HCT116 (cell line): ENCODE measurements at regions of chr11 and their contacts with region 1.

Region 1: GRCh38 chr11:29448246-29448877 is 568.5 kb downstream of the KCNA4 start:
- DNase-seq: peak; percentile 2
- ATAC-seq: no peak; the same call in 1 of the 2 replicates
- H3K4me3 ChIP-seq: no peak overlapping the region
- H3K27ac ChIP-seq: no peak overlapping the region
- H3K4me1 ChIP-seq: no peaks in the 10 kb centered on the region
- H3K27me3 ChIP-seq: no peaks in the 10 kb centered on the region; the same call in 1 of the 2 replicates
- CTCF ChIP-seq: peak in 2 of 3 experiments; percentile 14 to 45; a peak in 1 of 6 replicates
- POLR2A ChIP-seq: no peak
- RAD21 ChIP-seq: peak; percentile 64

Region 2: GRCh38 chr11:29527391-29527936 is 79.1 kb after region 1 on chr11:
- CTCF ChIA-PET with region 1: no interaction called
- POLR2A ChIA-PET with region 1: no interaction called
- RAD21 ChIA-PET with region 1: no interaction called
- intact Hi-C with region 1: no loop called
- DNase-seq: peak; percentile 15
- ATAC-seq: peak; percentile 50
- H3K4me3 ChIP-seq: no peak overlapping the region
- H3K27ac ChIP-seq: no peak overlapping the region
- H3K4me1 ChIP-seq: no peaks in the 10 kb centered on the region
- H3K27me3 ChIP-seq: no peaks in the 10 kb centered on the region
- CTCF ChIP-seq: peak in 2 of 3 experiments; percentile 25 to 37; a peak in 2 of 6 replicates
- POLR2A ChIP-seq: no peak
- RAD21 ChIP-seq: no peak

Region 3: GRCh38 chr11:29669310-29669709 is 220.9 kb after region 1 on chr11:
- CTCF ChIA-PET with region 1: no interaction called
- POLR2A ChIA-PET with region 1: no interaction called
- RAD21 ChIA-PET with region 1: no interaction called
- intact Hi-C with region 1: no loop called
- DNase-seq: no peak
- ATAC-seq: no peak
- H3K4me3 ChIP-seq: no peak overlapping the region
- H3K27ac ChIP-seq: no peak overlapping the region
- H3K4me1 ChIP-seq: no peaks in the 10 kb centered on the region
- H3K27me3 ChIP-seq: no peaks in the 10 kb centered on the region
- CTCF ChIP-seq: no peak
- POLR2A ChIP-seq: no peak
- RAD21 ChIP-seq: no peak

Region 4: GRCh38 chr11:30143098-30143705 is 694.8 kb after region 1 on chr11:
- CTCF ChIA-PET with region 1: interaction called, 12 read pairs
- POLR2A ChIA-PET with region 1: no interaction called
- RAD21 ChIA-PET with region 1: interaction called in 1 of 2 experiments, 3 read pairs
- intact Hi-C with region 1: loop called (anchors 1 kb)
- DNase-seq: peak; percentile 16
- ATAC-seq: peak; percentile 67
- H3K4me3 ChIP-seq: no peak overlapping the region
- H3K27ac ChIP-seq: no peak overlapping the region
- H3K4me1 ChIP-seq: no peaks in the 10 kb centered on the region
- H3K27me3 ChIP-seq: no peaks in the 10 kb centered on the region
- CTCF ChIP-seq: peak; percentile 27 to 76 (median 56); a peak in 5 of 6 replicates
- POLR2A ChIP-seq: no peak
- RAD21 ChIP-seq: peak; percentile 44

Region 5: GRCh38 chr11:30196400-30197206 is 748.2 kb after region 1 on chr11:
- CTCF ChIA-PET with region 1: interaction called, 6 read pairs
- POLR2A ChIA-PET with region 1: no interaction called
- RAD21 ChIA-PET with region 1: no interaction called
- intact Hi-C with region 1: loop called (anchors 2 kb)
- DNase-seq: peak; percentile 32
- ATAC-seq: peak; percentile 89
- H3K4me3 ChIP-seq: no peak overlapping the region
- H3K27ac ChIP-seq: no peak overlapping the region
- H3K4me1 ChIP-seq: no peaks in the 10 kb centered on the region
- H3K27me3 ChIP-seq: peaks cover 3% of the 10 kb centered on the region; the same call in 1 of the 2 replicates
- CTCF ChIP-seq: peak; percentile 36 to 87 (median 84); a peak in 5 of 6 replicates
- POLR2A ChIP-seq: no peak
- RAD21 ChIP-seq: peak; percentile 47

Region 6: DNA sequence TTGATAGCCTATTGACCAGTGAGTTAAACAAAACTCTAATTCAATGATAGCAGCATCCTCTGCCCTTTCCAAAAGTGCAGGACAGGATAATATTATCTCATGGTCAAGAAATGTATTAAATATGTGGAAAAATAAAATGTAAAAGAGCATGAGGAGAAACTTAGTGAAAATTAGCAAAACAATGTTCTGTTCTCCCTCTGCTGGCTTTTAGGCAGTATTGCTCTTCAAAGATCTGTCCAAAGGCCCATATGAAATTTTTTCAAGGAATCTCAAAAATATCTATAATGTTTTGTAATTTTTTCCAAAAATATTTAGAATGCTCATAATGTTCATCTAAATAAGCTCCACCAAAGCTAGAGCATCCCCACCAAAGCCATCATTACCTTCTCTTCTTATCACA is 866.3 kb after region 1 on chr11:
- CTCF ChIA-PET with region 1: no interaction called
- POLR2A ChIA-PET with region 1: no interaction called
- RAD21 ChIA-PET with region 1: no interaction called
- intact Hi-C with region 1: loop called (anchors 5 kb)
- DNase-seq: no peak
- ATAC-seq: peak; percentile 47; the same call in 1 of the 2 replicates
- H3K4me3 ChIP-seq: no peak overlapping the region
- H3K27ac ChIP-seq: no peak overlapping the region
- H3K4me1 ChIP-seq: no peaks in the 10 kb centered on the region
- H3K27me3 ChIP-seq: peaks cover 25% of the 10 kb centered on the region
- CTCF ChIP-seq: peak; percentile 25 to 52 (median 50); a peak in 5 of 6 replicates
- POLR2A ChIP-seq: no peak
- RAD21 ChIP-seq: peak; percentile 21; the same call in 1 of the 2 replicates